AG04450 (cell line): ENCODE measurements at regions of chr9 and their contacts with region 1.

Region 1: DNA sequence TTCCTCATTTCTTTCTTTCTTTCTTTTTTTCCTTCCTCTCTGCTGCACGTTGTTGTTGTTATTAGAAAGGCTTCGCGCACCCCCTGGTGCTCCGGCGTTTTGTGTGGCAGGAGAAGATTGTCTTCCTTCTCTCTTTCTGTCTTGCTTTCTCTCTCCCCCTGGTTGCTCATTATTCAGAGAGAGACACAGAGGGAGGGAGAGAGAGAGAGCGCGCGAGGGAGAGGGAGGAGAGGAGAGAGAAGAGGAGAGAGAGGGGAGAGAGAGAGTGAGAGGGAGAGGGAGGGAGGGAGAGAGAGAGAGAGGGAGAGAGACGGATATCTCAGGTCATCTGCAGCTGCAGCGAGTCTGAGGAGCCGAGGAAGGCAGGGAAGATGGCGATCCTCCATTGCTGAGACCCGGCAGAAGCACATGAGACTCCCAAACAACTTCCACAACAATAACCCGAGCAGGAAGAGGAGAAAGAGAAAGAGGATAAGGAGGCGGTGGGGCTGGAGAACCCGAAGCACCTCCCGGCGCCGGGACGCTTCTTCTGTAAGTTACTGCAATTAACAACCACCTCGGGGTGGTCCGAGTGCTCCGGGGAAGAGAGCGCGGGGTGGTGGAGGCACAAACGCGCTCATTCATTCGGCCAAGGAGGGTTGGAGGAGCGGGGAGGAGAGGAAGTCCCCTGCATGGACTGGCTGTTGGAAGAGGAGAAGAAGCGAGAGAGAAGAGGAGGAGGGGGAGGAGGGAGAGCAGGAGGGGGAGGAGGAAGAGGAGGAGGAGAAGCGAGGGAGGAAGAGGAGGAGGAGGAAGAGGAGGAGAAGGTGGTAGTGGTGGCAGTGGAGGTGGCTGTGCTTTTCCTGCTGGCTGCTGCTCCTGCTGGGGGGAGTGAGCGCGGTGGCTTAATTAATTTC is at the start of gene ZNF462:
- DNase-seq: no peak
- H3K4me3 ChIP-seq: peak within 1 kb of the TSS; percentile 95
- H3K27ac ChIP-seq: peak within 1 kb of the TSS; percentile 89
- H3K27me3 ChIP-seq: peaks cover 10% of the 10 kb centered on the region
- CTCF ChIP-seq: peak; percentile 33; the same call in 1 of the 2 replicates
- polyA plus RNA-seq, gene ZNF462: 7.5 and 11.9 TPM in 2 replicates

Region 2: DNA sequence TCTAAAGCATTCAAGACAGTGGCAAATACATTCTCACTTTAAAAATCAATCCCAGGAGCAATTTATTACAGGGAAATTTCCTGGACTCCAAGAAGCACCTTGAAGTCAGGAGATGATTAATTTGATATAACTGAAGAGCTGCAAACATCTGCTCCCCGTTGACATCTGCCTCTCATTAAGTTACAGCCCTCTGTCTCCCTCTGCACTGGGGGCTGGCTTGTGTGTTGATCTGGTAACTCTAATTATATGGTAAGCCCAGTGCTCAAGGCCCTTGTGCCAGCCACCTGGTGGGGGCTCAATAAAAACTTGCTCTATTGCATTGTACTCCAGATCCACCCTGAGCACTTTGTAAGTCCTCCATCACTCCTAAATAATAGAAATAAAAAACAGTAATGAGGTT is 131.2 kb before region 1 on chr9:
- CTCF ChIA-PET with region 1: no interaction called
- POLR2A ChIA-PET with region 1: no interaction called
- DNase-seq: no peak
- H3K4me3 ChIP-seq: no peak overlapping the region
- H3K27ac ChIP-seq: no peak overlapping the region
- H3K27me3 ChIP-seq: no peaks in the 10 kb centered on the region
- CTCF ChIP-seq: no peak

Region 3: GRCh38 chr9:106846857-106847256 is 16.2 kb before region 1 on chr9:
- CTCF ChIA-PET with region 1: no interaction called
- POLR2A ChIA-PET with region 1: no interaction called
- DNase-seq: no peak
- H3K4me3 ChIP-seq: no peak overlapping the region
- H3K27ac ChIP-seq: no peak overlapping the region
- H3K27me3 ChIP-seq: no peaks in the 10 kb centered on the region
- CTCF ChIP-seq: no peak

Region 4: DNA sequence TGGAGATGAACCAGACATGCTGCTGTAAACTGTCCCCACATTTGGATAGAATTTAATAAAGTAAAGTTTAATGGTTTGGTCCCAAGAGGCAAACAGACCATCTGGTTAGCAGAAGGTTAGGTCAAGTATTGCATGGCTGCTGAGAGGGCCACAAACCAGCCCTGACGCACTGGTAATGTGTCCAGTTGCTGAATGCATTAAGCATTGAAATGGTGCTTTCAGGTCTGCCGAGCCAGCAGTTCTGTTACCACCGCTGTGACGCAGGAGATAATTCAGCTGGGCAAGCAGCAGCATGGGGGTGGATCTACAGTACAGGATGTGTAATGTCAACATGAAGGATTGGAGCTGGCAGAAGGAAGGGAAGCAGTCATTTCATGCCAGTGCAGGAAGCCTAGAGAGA is 15.9 kb after region 1 on chr9:
- CTCF ChIA-PET with region 1: interaction called, 4 read pairs
- POLR2A ChIA-PET with region 1: interaction called, 11 read pairs
- DNase-seq: peak; percentile 85
- H3K4me3 ChIP-seq: no peak overlapping the region; the same call in 1 of the 2 replicates
- H3K27ac ChIP-seq: peak overlapping the region; percentile 63
- H3K27me3 ChIP-seq: no peaks in the 10 kb centered on the region
- CTCF ChIP-seq: no peak